Endothelial cell of umbilical vein (primary cell): ENCODE measurements at regions of chr5 and their contacts with region 1.

Region 1: GRCh38 chr5:17189381-17190036 is 27.9 kb upstream of the BASP1 start:
- DNase-seq: peak; percentile 91
- H3K4me3 ChIP-seq: no peak overlapping the region
- H3K27ac ChIP-seq: no peak overlapping the region
- H3K4me1 ChIP-seq: peaks cover 23% of the 10 kb centered on the region
- H3K27me3 ChIP-seq: no peaks in the 10 kb centered on the region
- CTCF ChIP-seq: peak; percentile 65 to 90
- POLR2A ChIP-seq: no peak

Region 2: DNA sequence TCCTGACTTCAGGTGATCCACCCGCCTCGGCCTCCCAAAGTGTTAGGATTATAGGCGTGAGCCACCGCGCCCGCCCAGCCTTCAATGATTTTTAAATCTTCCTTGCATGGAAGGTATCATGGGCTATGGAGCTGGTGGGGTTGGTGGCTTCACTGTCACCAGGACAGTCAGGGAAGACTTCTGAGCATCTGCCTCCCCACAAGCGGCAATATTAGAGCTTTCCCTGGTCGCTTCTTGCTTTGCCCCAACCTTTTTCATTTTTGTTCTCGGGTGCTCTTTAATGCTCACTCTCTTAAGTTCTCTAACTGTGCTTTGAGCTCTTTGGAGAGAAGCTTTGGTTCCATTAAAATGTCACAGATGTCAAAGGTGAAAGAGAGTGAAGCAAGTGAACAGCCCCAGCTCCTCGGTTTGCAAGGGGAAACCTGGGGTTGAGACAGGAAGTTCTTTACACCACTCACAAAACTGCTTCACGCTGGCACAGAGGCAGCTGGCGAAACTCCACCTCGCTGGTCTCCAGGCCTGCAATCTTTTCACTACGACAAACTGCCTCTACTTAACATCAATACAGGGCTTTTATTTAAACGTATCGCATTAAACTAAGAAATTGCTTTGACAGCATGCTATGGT is 430.2 kb before region 1 on chr5:
- CTCF ChIA-PET with region 1: interaction called, 20 read pairs
- POLR2A ChIA-PET with region 1: no interaction called
- dilution Hi-C with region 1: no loop called
- intact Hi-C with region 1: no loop called
- DNase-seq: peak; percentile 19
- H3K4me3 ChIP-seq: no peak overlapping the region
- H3K27ac ChIP-seq: no peak overlapping the region
- H3K4me1 ChIP-seq: no peaks in the 10 kb centered on the region
- H3K27me3 ChIP-seq: no peaks in the 10 kb centered on the region
- CTCF ChIP-seq: no peak
- POLR2A ChIP-seq: no peak

Region 3: DNA sequence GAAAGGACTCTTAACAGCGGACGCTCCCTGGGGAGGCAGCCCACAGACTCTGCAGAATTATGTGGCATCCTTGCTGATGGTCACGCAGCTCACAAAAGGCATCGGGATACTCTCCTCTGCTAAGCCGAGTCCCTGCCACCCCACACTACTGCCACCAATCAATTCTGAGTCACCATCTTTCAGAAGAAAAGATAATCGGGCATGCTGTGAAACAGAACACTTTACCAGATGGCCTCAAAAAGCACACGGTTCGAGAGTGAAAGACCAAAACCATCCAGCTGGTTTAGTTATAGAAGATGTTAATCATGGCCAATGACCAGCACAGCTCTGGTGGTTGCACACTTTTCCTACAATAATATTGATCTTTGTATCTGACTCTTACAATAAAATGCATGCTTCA is 389.7 kb before region 1 on chr5:
- CTCF ChIA-PET with region 1: interaction called, 194 read pairs
- POLR2A ChIA-PET with region 1: no interaction called
- dilution Hi-C with region 1: loop called (anchors 25 kb)
- intact Hi-C with region 1: no loop called
- DNase-seq: no peak
- H3K4me3 ChIP-seq: no peak overlapping the region
- H3K27ac ChIP-seq: no peak overlapping the region
- H3K4me1 ChIP-seq: peaks cover 3% of the 10 kb centered on the region
- H3K27me3 ChIP-seq: no peaks in the 10 kb centered on the region
- CTCF ChIP-seq: no peak
- POLR2A ChIP-seq: no peak

Region 4: DNA sequence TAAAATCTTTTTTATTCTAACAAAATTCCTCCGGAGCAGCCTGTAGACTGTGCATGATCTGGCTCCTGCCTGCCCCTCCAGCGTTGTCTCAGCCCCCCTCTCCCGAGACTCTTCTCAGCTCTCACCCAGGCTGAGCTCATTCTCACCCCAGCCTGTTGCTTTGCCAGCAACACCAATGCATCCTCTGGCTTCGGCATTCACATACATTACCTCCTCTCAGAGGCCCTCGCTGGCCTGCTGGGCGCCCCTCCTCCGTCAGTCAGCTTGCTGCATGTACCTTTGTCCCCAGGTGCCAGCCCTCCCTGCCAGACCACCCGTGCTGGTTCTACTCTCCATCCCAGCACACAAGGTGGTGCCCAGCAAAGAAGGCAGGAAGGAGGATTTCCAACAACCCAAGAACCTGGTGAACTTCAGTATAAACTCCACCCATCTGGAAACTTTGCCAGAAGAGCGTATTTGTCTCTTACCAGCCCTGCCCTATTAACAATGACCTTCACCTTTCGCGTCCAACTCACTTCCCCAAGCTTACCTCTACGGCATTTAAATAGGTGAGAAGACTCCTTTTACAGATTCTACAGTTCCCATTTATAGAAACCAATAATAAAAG is 288.4 kb before region 1 on chr5:
- CTCF ChIA-PET with region 1: interaction called, 10 read pairs
- POLR2A ChIA-PET with region 1: no interaction called
- dilution Hi-C with region 1: loop called (anchors 25 kb)
- intact Hi-C with region 1: no loop called
- DNase-seq: no peak
- H3K4me3 ChIP-seq: no peak overlapping the region
- H3K27ac ChIP-seq: no peak overlapping the region
- H3K4me1 ChIP-seq: peaks cover 17% of the 10 kb centered on the region
- H3K27me3 ChIP-seq: no peaks in the 10 kb centered on the region
- CTCF ChIP-seq: no peak
- POLR2A ChIP-seq: no peak

Region 5: DNA sequence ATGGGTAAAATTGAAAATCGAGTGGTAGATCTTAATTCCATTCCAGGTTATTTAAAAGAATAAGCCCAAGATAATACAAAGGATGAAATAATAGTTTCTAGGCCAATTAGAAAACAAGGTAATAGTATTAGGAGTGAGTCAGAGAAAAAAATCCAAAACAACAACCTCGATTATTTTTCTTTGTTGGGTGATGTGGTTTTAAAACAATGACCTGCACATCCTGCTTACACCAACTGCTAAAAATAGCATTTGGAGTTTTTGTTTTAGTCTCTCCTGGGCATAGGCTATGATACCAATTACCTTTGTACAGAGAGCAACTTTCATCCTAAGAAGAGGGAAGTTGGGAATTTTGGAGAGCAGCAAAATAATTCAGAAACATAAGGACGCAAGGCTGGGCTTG is 151.8 kb before region 1 on chr5:
- CTCF ChIA-PET with region 1: interaction called, 6 read pairs
- POLR2A ChIA-PET with region 1: no interaction called
- dilution Hi-C with region 1: no loop called
- intact Hi-C with region 1: loop called (anchors 1 kb)
- DNase-seq: peak; percentile 85
- H3K4me3 ChIP-seq: no peak overlapping the region
- H3K27ac ChIP-seq: peak overlapping the region; percentile 81
- H3K4me1 ChIP-seq: peaks cover 19% of the 10 kb centered on the region
- H3K27me3 ChIP-seq: no peaks in the 10 kb centered on the region
- CTCF ChIP-seq: no peak
- POLR2A ChIP-seq: no peak

Region 6: GRCh38 chr5:17143335-17143734 is 46.2 kb before region 1 on chr5:
- CTCF ChIA-PET with region 1: interaction called, 15 read pairs
- POLR2A ChIA-PET with region 1: no interaction called
- dilution Hi-C with region 1: no loop called
- intact Hi-C with region 1: loop called (anchors 2 kb)
- DNase-seq: peak; percentile 68
- H3K4me3 ChIP-seq: no peak overlapping the region
- H3K27ac ChIP-seq: peak overlapping the region; percentile 15
- H3K4me1 ChIP-seq: peaks cover 18% of the 10 kb centered on the region
- H3K27me3 ChIP-seq: no peaks in the 10 kb centered on the region
- CTCF ChIP-seq: no peak
- POLR2A ChIP-seq: no peak

Region 7: DNA sequence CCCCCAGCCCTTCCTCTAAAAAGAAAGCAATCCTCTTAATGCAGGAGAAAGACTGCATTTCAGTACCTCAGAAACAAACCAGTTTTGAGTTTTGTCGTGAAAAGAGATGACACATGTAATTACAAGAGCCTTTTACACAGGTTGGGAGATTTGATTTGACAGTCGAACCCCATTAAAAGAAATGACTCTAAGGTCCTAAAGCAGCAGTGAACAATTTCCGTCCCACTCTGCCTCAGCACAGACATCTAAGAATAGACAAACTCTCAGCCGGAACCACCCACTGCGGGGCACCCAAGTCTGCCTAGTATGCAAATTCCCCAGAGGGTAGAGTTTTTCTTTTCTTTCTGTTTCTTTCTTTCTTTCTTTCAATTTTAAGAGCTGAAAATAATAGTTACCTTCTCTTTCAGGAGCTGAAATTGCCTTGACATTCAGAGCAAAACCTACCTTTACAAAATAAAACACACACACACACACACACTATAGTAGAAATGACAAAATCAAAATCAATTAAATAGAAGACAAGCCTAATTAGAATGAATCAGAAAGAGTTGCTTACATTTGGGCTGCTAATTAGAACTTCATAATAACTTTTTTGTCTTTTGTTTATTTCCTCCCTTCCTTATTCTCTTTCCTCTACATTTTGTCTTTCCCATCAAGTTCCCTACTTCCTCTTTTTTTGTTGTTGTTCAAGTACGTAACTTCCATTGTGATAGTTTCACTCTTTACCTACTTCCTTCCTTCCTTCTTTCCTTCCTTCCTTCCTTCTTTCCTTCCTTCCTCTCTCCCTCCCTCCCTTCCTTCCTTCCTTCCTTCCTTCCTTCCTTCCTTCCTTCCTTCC is 93.0 kb after region 1 on chr5:
- CTCF ChIA-PET with region 1: no interaction called
- POLR2A ChIA-PET with region 1: no interaction called
- dilution Hi-C with region 1: no loop called
- intact Hi-C with region 1: no loop called
- DNase-seq: no peak
- H3K4me3 ChIP-seq: no peak overlapping the region
- H3K27ac ChIP-seq: no peak overlapping the region
- H3K4me1 ChIP-seq: no peaks in the 10 kb centered on the region
- H3K27me3 ChIP-seq: no peaks in the 10 kb centered on the region
- CTCF ChIP-seq: no peak
- POLR2A ChIP-seq: no peak

Region 8: GRCh38 chr5:17620627-17621026 is 431.1 kb after region 1 on chr5:
- CTCF ChIA-PET with region 1: no interaction called
- POLR2A ChIA-PET with region 1: no interaction called
- dilution Hi-C with region 1: no loop called
- intact Hi-C with region 1: no loop called
- DNase-seq: no peak
- H3K4me3 ChIP-seq: no peak overlapping the region
- H3K27ac ChIP-seq: no peak overlapping the region
- H3K4me1 ChIP-seq: no peaks in the 10 kb centered on the region
- H3K27me3 ChIP-seq: no peaks in the 10 kb centered on the region
- CTCF ChIP-seq: peak in 1 of 2 donors; percentile 6
- POLR2A ChIP-seq: no peak